AG04449 (cell line): ENCODE measurements at regions of chr3 and their contacts with region 1.

Region 1: DNA sequence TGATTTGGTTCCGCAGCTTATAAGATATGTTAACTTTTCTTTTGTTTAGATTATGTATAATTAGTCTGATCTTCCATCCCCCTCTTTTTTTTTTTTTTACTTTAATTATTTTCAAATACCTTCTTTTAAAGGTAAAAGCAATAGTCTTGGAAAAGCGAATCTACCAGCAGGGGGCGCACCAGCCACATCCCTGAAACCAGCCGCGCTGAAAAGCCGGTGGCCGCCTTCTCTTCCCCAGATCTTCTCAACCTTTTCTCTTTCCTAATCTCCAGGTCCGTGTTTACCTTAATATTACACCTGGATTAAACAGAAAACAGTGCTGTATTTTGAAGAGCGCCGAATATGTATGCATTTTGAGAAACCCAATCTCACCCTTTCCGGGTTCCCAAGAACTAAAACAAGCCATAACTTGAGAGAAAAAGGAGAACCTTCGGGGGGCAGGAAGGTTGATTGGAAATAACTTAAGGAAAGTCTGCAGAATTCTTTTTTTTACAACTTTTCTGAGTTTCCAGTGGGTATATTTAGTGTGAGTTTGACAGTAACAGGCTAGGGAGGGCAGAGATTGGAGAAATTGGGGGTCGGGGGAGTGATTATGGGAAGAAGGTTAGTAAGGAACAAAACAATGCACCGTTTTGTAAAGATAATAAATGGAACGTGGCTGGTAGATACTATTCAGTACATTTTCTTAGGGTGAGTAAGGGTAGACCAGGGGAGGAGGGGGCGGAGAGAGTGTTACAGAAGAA is 2.0 kb upstream of the SOX2 start:
- DNase-seq: no peak
- H3K4me3 ChIP-seq: no peak overlapping the region
- CTCF ChIP-seq: peak; percentile 61

Region 2: GRCh38 chr3:182618085-182618732 is 908.5 kb after region 1 on chr3:
- CTCF ChIA-PET with region 1: interaction called, 17 read pairs
- POLR2A ChIA-PET with region 1: no interaction called
- DNase-seq: no peak
- H3K4me3 ChIP-seq: no peak overlapping the region
- CTCF ChIP-seq: peak; percentile 28